ENCODE measurements at regions of chr17 and their contacts with region 1.

Region 1: DNA sequence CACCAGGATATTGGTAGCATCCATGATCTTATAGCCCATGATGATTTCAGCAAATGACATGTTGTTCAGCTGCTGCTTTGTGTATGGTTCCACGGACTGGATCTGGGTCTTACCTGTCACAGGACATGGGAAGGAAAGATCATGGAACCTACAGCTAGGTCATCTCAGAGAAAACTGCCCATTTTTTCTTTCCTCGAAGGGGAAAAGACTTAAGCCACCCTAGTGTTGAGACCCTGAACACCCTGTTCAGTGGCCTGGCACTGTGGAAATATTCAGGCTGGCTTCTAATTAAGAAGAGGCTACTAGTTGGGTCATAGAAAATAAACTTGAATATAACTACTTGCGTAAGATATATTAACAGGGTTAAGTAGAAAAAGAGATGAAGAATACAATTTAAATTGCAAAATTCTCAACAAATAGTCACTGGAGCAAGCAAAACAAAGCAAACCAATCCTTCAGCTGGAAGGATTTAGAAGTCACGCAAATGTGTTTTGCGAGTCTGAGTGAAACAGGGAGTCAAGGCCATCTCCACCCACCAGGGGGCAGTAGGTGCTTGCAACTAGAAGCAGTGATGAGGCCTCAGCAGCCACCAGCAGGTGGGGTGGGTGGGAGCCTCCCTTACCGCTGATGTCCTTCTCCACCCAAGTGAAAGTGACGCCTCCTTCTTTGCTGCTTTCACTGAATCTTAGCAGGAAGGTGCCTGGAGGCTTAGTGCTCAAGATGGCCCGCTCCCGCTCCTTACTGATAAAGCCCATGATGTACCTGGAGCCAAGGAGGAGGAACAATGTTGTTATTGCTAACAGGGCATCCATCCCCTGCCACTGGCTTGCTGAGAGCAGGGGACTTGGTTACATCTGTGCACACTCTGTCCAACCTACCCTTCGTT is 34.3 kb downstream of the STAT5A start:
- DNase-seq: peak; percentile 92
- H3K4me3 ChIP-seq: no peak overlapping the region
- H3K27ac ChIP-seq: peak overlapping the region; percentile 97
- H3K4me1 ChIP-seq: peaks cover 35% of the 10 kb centered on the region
- H3K27me3 ChIP-seq: no peaks in the 10 kb centered on the region
- CTCF ChIP-seq: peak; percentile 97 to 99
- POLR2A ChIP-seq: no peak

Region 2: DNA sequence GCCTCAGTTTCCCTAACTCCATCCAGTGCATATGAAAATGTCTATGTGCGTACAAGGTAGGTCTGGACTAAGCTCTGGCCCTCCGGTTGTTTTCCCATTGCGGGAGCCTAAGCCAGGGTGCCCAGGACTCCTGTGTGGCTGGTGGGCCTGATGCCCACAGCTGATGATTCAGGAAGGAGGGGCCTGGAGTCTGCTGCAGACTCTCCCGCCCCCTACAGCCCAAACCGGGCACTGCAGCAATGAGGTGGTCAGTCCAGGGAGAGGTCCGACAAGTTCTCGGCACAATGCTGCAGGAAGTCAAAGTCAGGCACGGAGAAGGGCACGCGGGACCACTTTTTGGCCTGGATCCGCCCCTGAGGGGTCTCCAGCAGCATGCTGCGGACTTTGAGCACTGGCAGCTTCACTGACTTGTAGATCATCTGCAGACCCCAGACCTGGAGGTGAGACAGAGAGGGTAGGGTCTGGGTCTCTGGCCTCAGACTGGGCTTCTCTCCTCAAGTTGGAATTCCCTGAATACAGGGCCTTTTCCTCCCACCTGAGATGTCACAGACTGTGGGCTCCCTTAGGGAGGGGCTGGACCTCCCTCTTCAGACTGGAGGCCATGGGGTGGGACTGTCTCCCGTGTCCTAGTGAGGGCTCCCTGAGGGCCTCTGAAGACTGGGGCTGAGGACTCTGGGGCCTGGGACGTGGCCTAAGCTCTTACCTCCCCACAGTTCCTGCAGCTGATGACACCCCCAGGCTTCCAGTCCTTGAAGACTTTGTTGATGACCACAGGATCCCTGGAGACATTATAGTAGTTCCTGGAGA is 220.9 kb before region 1 on chr17:
- CTCF ChIA-PET with region 1: no interaction called
- POLR2A ChIA-PET with region 1: no interaction called
- dilution Hi-C with region 1: no loop called
- intact Hi-C with region 1: no loop called
- DNase-seq: peak; percentile 78
- H3K4me3 ChIP-seq: no peak overlapping the region
- H3K27ac ChIP-seq: no peak overlapping the region
- H3K4me1 ChIP-seq: peaks cover 5% of the 10 kb centered on the region
- H3K27me3 ChIP-seq: peaks cover 14 to 15% of the 10 kb centered on the region in 2 experiments
- CTCF ChIP-seq: peak; percentile 96 to 97
- POLR2A ChIP-seq: no peak

Region 3: DNA sequence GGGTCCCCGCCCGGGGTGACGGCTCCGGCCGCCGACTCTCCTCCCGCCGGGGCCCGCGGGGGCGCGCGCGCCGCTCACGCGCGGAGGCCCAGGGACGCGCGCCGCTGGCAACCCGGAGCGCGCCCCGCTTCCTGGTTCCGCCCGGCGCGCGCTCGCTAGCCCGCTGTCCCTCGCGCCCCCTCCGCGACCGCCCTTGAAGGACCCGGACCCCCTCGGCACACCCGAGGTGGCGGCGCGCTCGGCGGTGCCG is 46.3 kb before region 1 on chr17 and contains the start of gene STAT5B:
- CTCF ChIA-PET with region 1: no interaction called
- POLR2A ChIA-PET with region 1: no interaction called
- dilution Hi-C with region 1: no loop called
- intact Hi-C with region 1: loop called (anchors 2 kb)
- DNase-seq: peak; percentile 46
- H3K4me3 ChIP-seq: peak within 1 kb of the TSS; percentile 65 to 96 (median 79)
- H3K27ac ChIP-seq: peak within 1 kb of the TSS; percentile 59
- H3K4me1 ChIP-seq: peaks cover 16% of the 10 kb centered on the region
- H3K27me3 ChIP-seq: no peaks in the 10 kb centered on the region
- CTCF ChIP-seq: no peak
- POLR2A ChIP-seq: no peak
- total RNA-seq, gene STAT5B: 53.1 and 53.7 TPM in 2 replicates

Region 4: GRCh38 chr17:42312285-42313130 is 10.1 kb before region 1 on chr17:
- CTCF ChIA-PET with region 1: interaction called, 43 read pairs
- POLR2A ChIA-PET with region 1: no interaction called
- dilution Hi-C with region 1: no loop called
- intact Hi-C with region 1: no loop called
- DNase-seq: peak; percentile 85
- H3K4me3 ChIP-seq: no peak overlapping the region
- H3K27ac ChIP-seq: no peak overlapping the region
- H3K4me1 ChIP-seq: peaks cover 43% of the 10 kb centered on the region
- H3K27me3 ChIP-seq: no peaks in the 10 kb centered on the region
- CTCF ChIP-seq: peak; percentile 67 to 88
- POLR2A ChIP-seq: no peak

Region 5: DNA sequence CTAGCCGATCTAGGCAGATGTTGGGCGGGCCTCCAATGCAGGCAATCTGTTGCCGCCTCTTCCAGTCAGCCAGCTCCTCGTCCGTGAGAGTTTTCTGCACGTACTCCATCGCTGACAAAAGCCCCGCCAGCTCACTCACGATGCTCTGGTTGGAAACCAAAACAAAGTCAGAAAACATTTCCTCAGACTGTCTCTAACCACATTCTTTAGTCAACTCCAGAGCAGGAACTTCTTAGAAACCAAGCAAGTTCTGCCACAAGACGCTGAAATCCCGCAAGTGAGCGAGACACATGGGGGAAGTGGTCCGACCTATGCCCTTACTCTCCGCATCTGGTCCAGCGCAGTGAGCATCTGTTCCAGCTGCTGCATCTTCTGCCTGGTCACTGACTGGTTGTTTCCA is 14.8 kb after region 1 on chr17:
- CTCF ChIA-PET with region 1: no interaction called
- POLR2A ChIA-PET with region 1: no interaction called
- dilution Hi-C with region 1: no loop called
- intact Hi-C with region 1: no loop called
- DNase-seq: no peak
- H3K4me3 ChIP-seq: no peak overlapping the region
- H3K27ac ChIP-seq: no peak overlapping the region
- H3K4me1 ChIP-seq: peaks cover 14% of the 10 kb centered on the region
- H3K27me3 ChIP-seq: no peaks in the 10 kb centered on the region
- CTCF ChIP-seq: no peak
- POLR2A ChIP-seq: no peak

Region 6: DNA sequence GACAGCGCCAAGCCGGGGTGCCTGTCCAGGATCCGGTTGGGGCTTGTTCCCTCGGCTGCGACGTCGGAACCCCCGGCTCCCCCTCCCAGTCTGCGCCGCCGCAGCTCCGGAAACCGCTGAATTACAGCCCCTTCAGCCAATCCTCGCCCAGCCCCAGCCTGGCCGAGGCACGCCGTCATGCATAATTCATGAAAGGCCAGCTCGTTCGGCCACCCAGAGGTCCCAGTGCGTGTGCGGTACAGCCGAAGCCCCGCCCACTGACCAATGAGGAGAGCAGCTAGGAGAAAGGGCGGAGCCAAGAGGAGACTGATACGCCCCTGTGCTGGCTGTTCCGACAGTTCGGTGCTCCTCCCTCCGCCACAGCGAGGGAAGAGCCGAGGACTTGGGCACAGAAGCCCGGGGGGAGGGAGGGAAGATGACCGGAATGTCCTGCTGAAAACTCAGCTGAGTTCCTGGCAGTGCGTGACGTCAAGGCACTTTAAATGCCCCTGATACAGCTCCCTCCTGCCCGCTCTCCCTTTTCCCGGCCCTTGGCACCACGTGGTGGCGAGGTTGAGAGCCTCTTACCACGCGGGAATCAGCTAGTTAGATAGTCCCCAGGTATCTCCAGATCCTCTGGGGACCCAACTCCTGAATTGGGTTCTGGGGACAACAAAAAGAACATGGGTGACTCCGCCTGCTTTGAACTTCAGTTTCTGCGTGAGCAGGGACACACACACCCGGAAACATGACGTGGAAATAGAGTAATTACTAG is 65.9 kb after region 1 on chr17 and contains the start of gene STAT3:
- CTCF ChIA-PET with region 1: interaction called, 6 read pairs
- POLR2A ChIA-PET with region 1: no interaction called
- dilution Hi-C with region 1: no loop called
- intact Hi-C with region 1: loop called (anchors 1 kb)
- DNase-seq: peak; percentile 100
- H3K4me3 ChIP-seq: peak within 1 kb of the TSS; percentile 41 to 89 (median 55)
- H3K27ac ChIP-seq: peak within 1 kb of the TSS; percentile 98
- H3K4me1 ChIP-seq: peaks cover 21% of the 10 kb centered on the region
- H3K27me3 ChIP-seq: no peaks in the 10 kb centered on the region
- CTCF ChIP-seq: no peak
- POLR2A ChIP-seq: peak; percentile 84
- total RNA-seq, gene STAT3: 108 and 124 TPM in 2 replicates

Region 7: GRCh38 chr17:42405963-42406495 is 83.4 kb after region 1 on chr17:
- CTCF ChIA-PET with region 1: interaction called, 57 read pairs
- POLR2A ChIA-PET with region 1: interaction called, 5 read pairs
- dilution Hi-C with region 1: no loop called
- intact Hi-C with region 1: loop called (anchors 1 kb)
- DNase-seq: peak; percentile 80
- H3K4me3 ChIP-seq: no peak overlapping the region
- H3K27ac ChIP-seq: no peak overlapping the region
- H3K4me1 ChIP-seq: peaks cover 58% of the 10 kb centered on the region
- H3K27me3 ChIP-seq: no peaks in the 10 kb centered on the region
- CTCF ChIP-seq: peak; percentile 75 to 85
- POLR2A ChIP-seq: no peak

Region 8: DNA sequence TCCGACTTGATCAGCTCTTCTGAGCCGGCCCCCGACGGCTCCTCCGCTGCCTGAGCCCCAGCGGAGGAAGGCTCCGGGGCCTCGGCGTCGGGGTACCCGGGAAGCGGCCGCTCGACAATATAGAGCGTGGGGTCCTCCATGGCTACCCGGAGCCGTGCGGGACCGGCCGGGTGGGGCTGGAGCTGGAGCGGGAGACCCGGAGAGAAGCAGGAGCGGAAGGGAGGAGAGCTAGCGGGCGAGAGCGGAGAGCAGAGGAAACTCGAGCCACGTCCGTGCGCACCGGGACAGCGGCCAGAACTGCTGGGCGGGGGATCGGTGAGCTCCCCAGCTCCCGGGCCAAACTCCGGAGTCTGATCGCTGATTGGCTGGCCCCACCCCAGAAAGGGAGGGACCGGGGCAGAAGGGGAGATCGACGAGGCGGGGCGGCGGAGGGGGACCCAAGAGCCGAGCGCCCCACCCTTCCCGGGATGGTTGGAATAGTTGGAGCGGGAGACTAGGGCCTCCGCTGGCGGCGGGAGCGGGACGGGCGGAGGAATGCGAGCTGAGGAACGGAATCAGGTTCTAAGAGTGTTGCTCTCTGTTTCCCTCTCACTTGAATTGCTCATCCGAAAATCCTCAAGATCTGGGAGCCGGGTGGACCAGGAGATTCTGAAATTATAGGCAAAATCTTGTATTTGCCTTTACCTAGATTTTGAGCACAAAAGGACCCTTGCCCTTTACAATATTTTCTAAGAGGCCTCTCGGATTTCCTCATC is 100.5 kb after region 1 on chr17 and contains the start of gene CAVIN1:
- CTCF ChIA-PET with region 1: interaction called, 7 read pairs
- POLR2A ChIA-PET with region 1: interaction called, 5 read pairs
- dilution Hi-C with region 1: no loop called
- intact Hi-C with region 1: loop called (anchors 1 kb)
- DNase-seq: peak; percentile 95
- H3K4me3 ChIP-seq: peak within 1 kb of the TSS; percentile 67 to 84 (median 79)
- H3K27ac ChIP-seq: peak within 1 kb of the TSS; percentile 80
- H3K4me1 ChIP-seq: peaks cover 24% of the 10 kb centered on the region
- H3K27me3 ChIP-seq: no peaks in the 10 kb centered on the region
- CTCF ChIP-seq: no peak
- POLR2A ChIP-seq: peak; percentile 99
- total RNA-seq, gene CAVIN1: 663 and 684 TPM in 2 replicates

Region 9: GRCh38 chr17:42677008-42677857 is 354.6 kb after region 1 on chr17:
- CTCF ChIA-PET with region 1: no interaction called
- POLR2A ChIA-PET with region 1: no interaction called
- dilution Hi-C with region 1: no loop called
- intact Hi-C with region 1: loop called (anchors 5 kb)
- DNase-seq: peak; percentile 100
- H3K4me3 ChIP-seq: peak overlapping the region in 2 of 3 experiments; percentile 70 to 87
- H3K27ac ChIP-seq: peak overlapping the region; percentile 47
- H3K4me1 ChIP-seq: peaks cover 42% of the 10 kb centered on the region
- H3K27me3 ChIP-seq: no peaks in the 10 kb centered on the region
- CTCF ChIP-seq: no peak
- POLR2A ChIP-seq: peak; percentile 24

Measured in endothelial cell of umbilical vein (primary cell).